GM23248 (cell line): ENCODE measurements at regions of chr5 and their contacts with region 1.

Region 1: DNA sequence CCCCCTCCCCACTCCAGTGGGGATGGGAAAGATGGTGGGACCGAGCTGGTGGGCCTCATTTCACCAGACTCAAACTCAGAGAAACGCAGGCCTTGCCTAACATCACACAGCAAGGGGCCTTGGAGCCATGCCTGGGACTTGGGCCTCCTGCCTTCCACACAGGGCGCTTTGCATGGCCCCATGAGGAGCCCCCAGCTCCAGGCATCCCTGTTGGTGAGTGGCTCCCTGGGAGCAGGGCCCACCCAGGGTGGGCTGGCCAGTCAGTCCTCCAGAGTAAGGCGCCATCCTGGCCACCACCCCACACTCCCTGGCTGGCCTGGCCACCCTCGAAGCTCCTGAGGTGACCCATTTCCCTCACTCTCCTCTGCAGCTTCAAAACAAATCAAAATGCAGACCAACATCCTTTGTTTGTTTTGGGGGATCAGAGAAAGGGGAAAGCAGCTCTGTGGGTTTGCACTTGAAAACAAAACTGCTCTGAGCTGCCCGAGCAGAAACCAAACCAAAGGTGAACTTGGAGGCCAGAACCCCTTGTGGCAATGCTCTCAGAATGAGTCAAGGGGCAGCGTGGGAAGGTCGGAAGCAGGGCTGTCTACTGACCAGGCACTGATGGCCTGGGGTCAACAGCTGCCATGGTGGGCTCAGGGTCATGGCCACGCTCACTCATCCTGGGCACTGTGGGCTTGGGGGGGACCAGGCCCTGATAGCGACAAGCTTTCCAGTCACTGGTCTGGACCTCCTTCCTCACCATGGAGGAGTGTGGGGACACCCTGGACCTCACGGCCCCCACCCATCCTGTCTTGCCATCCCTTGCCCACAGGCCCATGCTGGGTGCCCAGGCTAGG is 37.0 kb upstream of the VDAC1 start:
- DNase-seq: no peak
- H3K4me3 ChIP-seq: no peak overlapping the region
- H3K27ac ChIP-seq: no peak overlapping the region
- H3K4me1 ChIP-seq: no peaks in the 10 kb centered on the region; the same call in 1 of the 2 replicates
- H3K27me3 ChIP-seq: no peaks in the 10 kb centered on the region

Region 2: DNA sequence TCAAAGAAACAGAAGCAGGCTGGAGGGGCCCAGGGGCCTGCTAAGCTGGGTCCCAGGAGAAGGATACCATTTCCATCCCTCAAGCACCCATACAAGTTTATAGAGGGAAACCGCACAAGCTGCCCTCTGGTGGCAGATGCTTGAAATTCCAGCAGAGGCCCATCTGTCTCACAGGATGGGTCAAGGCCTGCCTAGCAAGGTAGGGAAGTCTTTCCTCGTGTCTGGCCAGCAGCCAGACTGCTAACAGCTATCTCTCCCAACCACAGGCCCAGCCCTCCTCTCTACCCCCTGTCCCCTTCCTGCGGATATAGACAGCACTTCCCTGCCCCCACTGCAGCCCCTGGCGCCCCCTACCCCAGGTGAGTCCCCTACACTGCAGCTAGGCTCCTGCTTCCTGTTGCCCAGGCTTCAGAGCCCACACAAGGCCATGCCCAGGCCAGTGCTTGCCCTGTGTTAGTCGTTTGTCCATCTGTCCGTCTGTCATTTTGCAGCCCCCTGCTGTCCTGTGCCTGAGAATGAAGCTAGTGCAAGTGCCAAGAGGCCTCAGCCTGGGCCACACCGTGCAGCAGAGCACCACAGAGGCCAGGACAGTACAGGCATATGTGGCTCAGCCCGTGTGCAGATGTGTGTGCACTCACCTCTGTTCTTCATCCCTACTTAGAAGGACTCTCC is 98.9 kb after region 1 on chr5:
- in situ Hi-C with region 1: loop called (anchors 5 kb)
- DNase-seq: peak; percentile 83
- H3K4me3 ChIP-seq: no peak overlapping the region
- H3K27ac ChIP-seq: no peak overlapping the region
- H3K4me1 ChIP-seq: peaks cover 19% of the 10 kb centered on the region
- H3K27me3 ChIP-seq: no peaks in the 10 kb centered on the region